OCI-LY7 (cell line): ENCODE measurements at regions of chr5 and their contacts with region 1.

Region 1: GRCh38 chr5:86684222-86684621 is 66.5 kb downstream of the COX7C start:
- DNase-seq: no peak
- H3K4me3 ChIP-seq: no peak overlapping the region
- H3K27ac ChIP-seq: no peak overlapping the region
- H3K4me1 ChIP-seq: no peaks in the 10 kb centered on the region
- CTCF ChIP-seq: no peak

Region 2: GRCh38 chr5:86482008-86482407 is 202.2 kb before region 1 on chr5:
- CTCF ChIA-PET with region 1: no interaction called
- POLR2A ChIA-PET with region 1: no interaction called
- intact Hi-C with region 1: loop called (anchors 10 kb)
- DNase-seq: no peak
- H3K4me3 ChIP-seq: no peak overlapping the region
- H3K27ac ChIP-seq: no peak overlapping the region
- H3K4me1 ChIP-seq: no peaks in the 10 kb centered on the region
- CTCF ChIP-seq: no peak

Region 3: GRCh38 chr5:86565197-86565789 is 118.9 kb before region 1 on chr5:
- CTCF ChIA-PET with region 1: no interaction called
- POLR2A ChIA-PET with region 1: no interaction called
- intact Hi-C with region 1: loop called (anchors 5 kb)
- DNase-seq: no peak
- H3K4me3 ChIP-seq: no peak overlapping the region
- H3K27ac ChIP-seq: no peak overlapping the region
- H3K4me1 ChIP-seq: no peaks in the 10 kb centered on the region
- CTCF ChIP-seq: no peak

Region 4: GRCh38 chr5:86631165-86631564 is 53.1 kb before region 1 on chr5:
- CTCF ChIA-PET with region 1: no interaction called
- POLR2A ChIA-PET with region 1: no interaction called
- intact Hi-C with region 1: no loop called
- DNase-seq: no peak
- H3K4me3 ChIP-seq: no peak overlapping the region
- H3K27ac ChIP-seq: no peak overlapping the region
- H3K4me1 ChIP-seq: no peaks in the 10 kb centered on the region
- CTCF ChIP-seq: no peak

Region 5: GRCh38 chr5:87015901-87016300 is 331.7 kb after region 1 on chr5:
- CTCF ChIA-PET with region 1: no interaction called
- POLR2A ChIA-PET with region 1: no interaction called
- intact Hi-C with region 1: loop called (anchors 10 kb)
- DNase-seq: no peak
- H3K4me3 ChIP-seq: no peak overlapping the region
- H3K27ac ChIP-seq: no peak overlapping the region
- H3K4me1 ChIP-seq: peaks cover 14% of the 10 kb centered on the region
- CTCF ChIP-seq: no peak